ENCODE measurements at regions of chr18 and their contacts with region 1.

Region 1: GRCh38 chr18:32919799-32920198 is 147.0 kb upstream of the KLHL14 start:
- DNase-seq: peak; percentile 85
- ATAC-seq: peak; percentile 100
- H3K4me3 ChIP-seq: no peak overlapping the region
- H3K27ac ChIP-seq: no peak overlapping the region
- H3K4me1 ChIP-seq: peaks cover 21% of the 10 kb centered on the region
- H3K27me3 ChIP-seq: no peaks in the 10 kb centered on the region
- CTCF ChIP-seq: peak; percentile 89
- EP300 ChIP-seq: no peak
- POLR2A ChIP-seq: no peak
- RAD21 ChIP-seq: peak; percentile 89

Region 2: GRCh38 chr18:32104530-32104929 is 815.3 kb before region 1 on chr18:
- CTCF ChIA-PET with region 1: no interaction called
- POLR2A ChIA-PET with region 1: no interaction called
- in situ Hi-C with region 1: no loop called
- intact Hi-C with region 1: no loop called
- DNase-seq: no peak
- ATAC-seq: no peak
- H3K4me3 ChIP-seq: no peak overlapping the region
- H3K27ac ChIP-seq: no peak overlapping the region
- H3K4me1 ChIP-seq: 0 out of 2 replicates have a peak, but pooled peaks cover under 1% of the 10 kb centered on the region
- H3K27me3 ChIP-seq: no peaks in the 10 kb centered on the region
- CTCF ChIP-seq: no peak
- EP300 ChIP-seq: no peak
- POLR2A ChIP-seq: no peak
- RAD21 ChIP-seq: no peak

Region 3: GRCh38 chr18:32674491-32674890 is 245.3 kb before region 1 on chr18:
- CTCF ChIA-PET with region 1: interaction called, 5 read pairs
- POLR2A ChIA-PET with region 1: no interaction called
- in situ Hi-C with region 1: no loop called
- intact Hi-C with region 1: loop called (anchors 1 kb)
- DNase-seq: peak; percentile 28
- ATAC-seq: peak; percentile 68
- H3K4me3 ChIP-seq: no peak overlapping the region
- H3K27ac ChIP-seq: no peak overlapping the region
- H3K4me1 ChIP-seq: no peaks in the 10 kb centered on the region
- H3K27me3 ChIP-seq: no peaks in the 10 kb centered on the region
- CTCF ChIP-seq: peak; percentile 42
- EP300 ChIP-seq: no peak
- POLR2A ChIP-seq: no peak
- RAD21 ChIP-seq: no peak

Region 4: GRCh38 chr18:32831781-32832180 is 88.0 kb before region 1 on chr18:
- CTCF ChIA-PET with region 1: no interaction called
- POLR2A ChIA-PET with region 1: no interaction called
- in situ Hi-C with region 1: no loop called
- intact Hi-C with region 1: loop called (anchors 10 kb)
- DNase-seq: no peak
- ATAC-seq: peak; percentile 31; the same call in 2 of the 3 replicates
- H3K4me3 ChIP-seq: no peak overlapping the region
- H3K27ac ChIP-seq: no peak overlapping the region
- H3K4me1 ChIP-seq: no peaks in the 10 kb centered on the region
- H3K27me3 ChIP-seq: no peaks in the 10 kb centered on the region; a peak in 1 of 5 replicates
- CTCF ChIP-seq: no peak
- EP300 ChIP-seq: no peak
- POLR2A ChIP-seq: no peak
- RAD21 ChIP-seq: no peak

Region 5: DNA sequence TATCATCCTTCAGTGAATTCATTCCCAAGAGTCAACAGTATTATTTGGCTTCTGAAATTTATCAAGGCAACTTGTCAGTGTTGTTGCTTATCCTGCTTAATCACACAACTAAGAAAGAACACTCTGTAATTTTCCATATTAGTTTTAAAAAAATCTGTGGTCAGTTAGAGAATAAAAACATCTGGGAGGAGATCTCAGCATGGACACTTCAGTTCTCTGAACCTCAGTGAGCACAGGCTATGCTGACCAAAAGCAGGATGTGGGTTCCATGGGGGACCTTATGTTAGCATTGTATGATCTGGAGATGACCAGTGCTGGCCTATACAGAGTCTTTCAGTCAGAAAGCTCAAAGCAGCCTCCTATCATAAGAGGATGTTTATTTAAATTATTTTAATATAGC is 67.9 kb before region 1 on chr18:
- CTCF ChIA-PET with region 1: no interaction called
- POLR2A ChIA-PET with region 1: no interaction called
- in situ Hi-C with region 1: no loop called
- intact Hi-C with region 1: no loop called
- DNase-seq: no peak
- ATAC-seq: no peak
- H3K4me3 ChIP-seq: no peak overlapping the region
- H3K27ac ChIP-seq: no peak overlapping the region
- H3K4me1 ChIP-seq: peaks cover 6% of the 10 kb centered on the region; the same call in 1 of the 2 replicates
- H3K27me3 ChIP-seq: no peaks in the 10 kb centered on the region
- CTCF ChIP-seq: no peak
- EP300 ChIP-seq: no peak
- POLR2A ChIP-seq: no peak
- RAD21 ChIP-seq: no peak